ENCODE measurements at regions of chrX and their contacts with region 1.

Region 1: GRCh38 chrX:136162831-136163570 is 15.7 kb downstream of the FHL1 start:
- DNase-seq: peak in 37 of 42 donors; percentile 9 to 78 (median 44)

Region 2: DNA sequence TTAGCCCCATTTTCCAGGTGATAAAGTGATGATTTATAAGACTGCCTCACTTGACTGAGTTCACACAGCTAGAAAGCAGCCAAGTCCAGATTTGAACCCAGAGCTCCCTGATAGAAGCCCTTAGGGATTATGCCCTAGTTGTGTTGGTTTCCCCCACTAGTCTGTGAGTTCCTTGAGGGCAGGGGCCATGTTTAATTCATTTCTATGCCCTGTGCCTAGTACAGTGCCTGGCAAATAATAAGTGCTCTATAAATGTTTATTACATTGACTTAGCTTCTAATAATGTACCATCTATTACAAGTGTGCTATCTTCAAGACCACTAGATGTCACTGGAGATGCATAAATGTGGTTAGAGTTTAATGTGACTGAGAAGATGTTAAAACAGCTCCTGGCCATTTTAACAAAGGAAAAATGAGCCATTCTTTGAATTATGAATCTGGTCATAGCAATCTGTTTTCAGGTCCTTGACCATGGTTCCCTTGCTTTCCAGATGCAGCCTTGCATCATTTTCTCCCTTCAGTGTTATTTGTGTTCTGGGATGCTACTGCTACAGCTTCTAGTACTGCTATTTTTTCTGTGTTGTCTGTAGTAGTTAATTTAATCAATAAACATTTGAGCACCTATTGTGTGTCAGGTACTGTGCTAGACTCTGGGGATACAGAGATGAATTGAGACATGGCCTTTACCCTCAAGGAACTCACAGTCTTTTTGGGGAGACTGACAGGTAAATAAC is 134.6 kb before region 1 on chrX:
- intact Hi-C with region 1: loop called (anchors 10 kb)
- DNase-seq: peak in 1 of 42 donors; percentile 17

Measured in head of caudate nucleus (tissue), 42 donors.